ENCODE measurements at regions of chr13 and their contacts with region 1.

Region 1: GRCh38 chr13:40666045-40666904 is at the start of gene FOXO1:
- DNase-seq: peak; percentile 94 to 95
- ATAC-seq: peak; percentile 68 to 81 (median 78)
- H3K4me3 ChIP-seq: peak within 1 kb of the TSS; percentile 95
- H3K27ac ChIP-seq: peak within 1 kb of the TSS; percentile 99
- H3K4me1 ChIP-seq: peaks cover 31% of the 10 kb centered on the region
- H3K27me3 ChIP-seq: no peaks in the 10 kb centered on the region
- CTCF ChIP-seq: peak; percentile 4
- total RNA-seq, gene FOXO1: 54.3 to 160 (median 91.1) TPM

Region 2: GRCh38 chr13:40230833-40231266 is 435.4 kb before region 1 on chr13:
- intact Hi-C with region 1: loop called (anchors 5 to 10 kb)
- DNase-seq: no peak
- ATAC-seq: no peak
- H3K4me3 ChIP-seq: no peak overlapping the region
- H3K27ac ChIP-seq: no peak overlapping the region
- H3K4me1 ChIP-seq: peaks cover 34% of the 10 kb centered on the region
- H3K27me3 ChIP-seq: no peaks in the 10 kb centered on the region
- CTCF ChIP-seq: no peak

Region 3: DNA sequence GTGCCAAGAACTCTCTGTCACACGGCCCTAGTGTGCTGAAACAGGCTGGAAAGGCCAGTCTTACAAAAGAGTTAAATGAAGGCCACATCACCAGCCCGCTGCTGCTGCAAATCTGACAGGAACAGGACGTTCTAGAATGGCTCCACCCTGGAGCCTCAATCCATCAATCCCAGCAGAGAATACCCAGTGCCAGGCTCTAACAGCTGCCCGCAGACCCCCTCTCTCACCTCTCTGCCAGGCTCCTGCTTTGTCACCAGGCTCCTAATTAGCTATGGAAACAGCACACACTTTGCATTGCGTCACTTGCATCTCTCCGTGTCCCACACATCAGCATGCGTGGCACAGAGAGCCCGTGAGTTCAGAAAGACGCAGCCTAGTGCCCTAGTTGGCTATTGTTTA is 313.9 kb before region 1 on chr13:
- intact Hi-C with region 1: loop called (anchors 1 to 5 kb)
- DNase-seq: peak; percentile 77 to 91
- ATAC-seq: peak; percentile 31 to 85 (median 81)
- H3K4me3 ChIP-seq: no peak overlapping the region
- H3K27ac ChIP-seq: peak overlapping the region; percentile 67
- H3K4me1 ChIP-seq: peaks cover 36% of the 10 kb centered on the region
- H3K27me3 ChIP-seq: no peaks in the 10 kb centered on the region
- CTCF ChIP-seq: no peak

Region 4: DNA sequence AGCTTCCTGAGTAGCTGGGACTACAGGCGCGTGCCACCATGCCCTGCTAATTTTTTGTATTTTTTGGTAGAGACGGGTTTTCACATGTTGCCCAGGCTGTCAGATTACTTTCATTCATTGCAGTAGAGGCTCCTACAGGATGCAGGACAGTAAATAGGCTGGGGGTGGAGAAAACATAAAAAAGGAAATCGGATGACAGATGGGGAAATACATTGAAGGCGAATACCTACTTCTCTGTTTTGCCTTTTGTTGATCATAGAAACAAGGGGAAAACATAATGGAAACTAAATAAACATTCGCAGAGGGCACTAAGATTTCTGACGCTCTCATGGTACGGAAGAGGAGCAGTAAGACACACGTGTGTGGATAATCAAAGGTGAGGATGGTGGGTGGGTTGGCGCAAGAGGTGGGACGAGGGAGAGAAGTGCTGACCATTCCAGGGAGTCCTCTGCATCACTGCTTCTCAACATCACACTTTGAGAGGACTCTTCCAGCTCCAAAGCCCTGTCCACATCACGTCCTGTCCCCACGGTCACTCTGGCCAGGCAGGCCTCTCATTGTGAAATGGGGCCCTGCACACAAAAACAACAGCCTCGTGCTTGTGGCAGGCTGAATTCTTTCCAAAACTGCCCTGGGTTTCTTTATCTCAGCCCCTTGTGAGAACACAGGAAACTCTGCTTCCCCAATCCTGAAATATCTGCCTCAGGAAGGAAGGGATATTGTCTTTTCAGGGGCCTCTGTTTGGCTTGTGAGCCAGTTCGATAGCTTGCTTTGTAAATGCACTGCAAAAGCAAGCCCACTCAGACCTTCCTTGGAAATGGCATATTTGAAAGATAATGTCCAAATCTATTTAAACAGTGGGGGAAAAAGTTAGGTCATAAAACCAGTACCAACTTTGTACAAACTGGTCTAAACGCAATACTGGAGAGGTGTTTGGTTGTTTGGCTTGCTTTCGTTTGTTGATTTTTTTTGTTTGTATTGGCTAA is 188.4 kb before region 1 on chr13:
- intact Hi-C with region 1: loop called in 1 of 2 experiments (anchors 10 kb)
- DNase-seq: peak; percentile 49 to 82
- ATAC-seq: peak in 3 of 4 donors; percentile 34 to 72 (median 49)
- H3K4me3 ChIP-seq: no peak overlapping the region
- H3K27ac ChIP-seq: peak overlapping the region; percentile 50
- H3K4me1 ChIP-seq: peaks cover 10% of the 10 kb centered on the region
- H3K27me3 ChIP-seq: no peaks in the 10 kb centered on the region
- CTCF ChIP-seq: no peak

Region 5: GRCh38 chr13:40615619-40616018 is 50.7 kb before region 1 on chr13:
- intact Hi-C with region 1: loop called (anchors 5 kb)
- DNase-seq: no peak
- ATAC-seq: peak in 3 of 4 donors; percentile 1 to 5 (median 3)
- H3K4me3 ChIP-seq: no peak overlapping the region
- H3K27ac ChIP-seq: peak overlapping the region; percentile 74
- H3K4me1 ChIP-seq: peaks cover 100% of the 10 kb centered on the region
- H3K27me3 ChIP-seq: no peaks in the 10 kb centered on the region
- CTCF ChIP-seq: no peak

Region 6: GRCh38 chr13:40629678-40630384 is 36.4 kb before region 1 on chr13:
- intact Hi-C with region 1: no loop called
- DNase-seq: no peak
- ATAC-seq: no peak
- H3K4me3 ChIP-seq: no peak overlapping the region
- H3K27ac ChIP-seq: no peak overlapping the region
- H3K4me1 ChIP-seq: peaks cover 78% of the 10 kb centered on the region
- H3K27me3 ChIP-seq: no peaks in the 10 kb centered on the region
- CTCF ChIP-seq: no peak

Measured in psoas muscle (tissue), 8 donors.